CD8-positive, alpha-beta T cell (primary cell): ENCODE measurements at regions of chr20 and their contacts with region 1.

Region 1: DNA sequence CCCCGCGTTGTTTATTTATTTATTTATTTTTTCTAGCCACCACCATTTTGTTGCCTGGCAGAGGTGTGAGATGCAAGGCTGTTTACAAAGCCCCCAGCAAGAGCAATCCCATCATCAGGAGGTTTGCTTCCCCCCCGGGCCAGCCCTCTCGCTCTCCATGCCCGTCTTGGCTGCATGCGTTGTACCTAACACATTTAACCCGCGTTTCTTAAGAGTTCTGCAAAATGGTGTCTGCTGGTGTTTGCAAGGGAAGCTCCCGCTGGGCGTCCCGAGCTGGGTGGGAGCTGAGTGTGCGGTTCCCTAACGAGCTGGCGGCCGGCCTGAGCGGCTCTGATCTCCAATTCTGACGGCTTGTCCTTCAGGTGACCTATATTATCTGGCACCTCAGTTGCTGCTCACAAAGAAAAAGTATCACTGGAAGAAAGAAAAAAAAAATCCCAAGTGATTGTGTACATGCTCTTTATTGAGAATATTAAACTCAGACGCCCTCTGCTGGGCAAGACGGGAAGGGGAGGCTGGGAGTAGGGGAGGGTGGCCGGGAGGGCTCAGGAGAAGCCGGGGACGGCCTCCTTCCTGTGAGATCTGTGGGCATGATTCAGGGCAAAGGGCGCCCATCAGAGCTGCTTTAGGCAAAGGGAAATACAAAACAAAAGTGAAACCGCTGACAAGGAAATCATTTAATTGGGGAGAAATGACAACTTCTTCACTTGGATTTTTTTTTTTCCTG is 154.8 kb downstream of the BCAS1 start:
- DNase-seq: peak; percentile 87 to 98 (median 95)
- ATAC-seq: peak; percentile 98
- H3K4me3 ChIP-seq: peak overlapping the region; percentile 76 to 81
- H3K4me3 Mint-ChIP-seq: peak overlapping the region; percentile 94
- H3K27ac ChIP-seq: peak overlapping the region; percentile 38 to 64
- H3K27ac Mint-ChIP-seq: peak overlapping the region; percentile 92
- H3K4me1 ChIP-seq: peaks cover 21% of the 10 kb centered on the region
- H3K4me1 Mint-ChIP-seq: peaks cover 26% of the 10 kb centered on the region
- H3K27me3 ChIP-seq: no peaks in the 10 kb centered on the region
- H3K27me3 Mint-ChIP-seq: no peaks in the 10 kb centered on the region
- CTCF ChIP-seq: peak; percentile 85

Region 2: DNA sequence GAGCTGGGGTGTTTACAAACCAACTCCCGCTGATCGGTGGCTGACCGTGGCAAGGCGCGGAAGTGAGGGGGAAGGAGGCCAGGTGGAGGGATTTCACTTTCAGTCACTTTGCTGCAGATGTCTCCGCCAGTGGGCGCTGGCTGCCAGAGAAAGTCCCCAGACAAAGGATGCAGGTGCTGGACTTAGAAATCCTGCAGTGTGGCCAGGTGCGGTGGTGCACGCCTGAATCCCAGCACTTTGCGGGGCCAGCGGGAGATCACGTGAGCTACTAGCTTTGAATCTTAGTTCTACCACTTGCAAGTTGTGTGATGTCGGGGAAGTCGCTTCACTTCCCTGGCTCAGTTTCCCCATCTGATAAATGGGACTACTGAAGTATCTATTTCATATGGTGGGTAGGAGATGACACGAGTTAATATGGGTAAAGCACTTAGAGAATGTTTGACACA is 502.4 kb before region 1 on chr20:
- CTCF ChIA-PET with region 1: no interaction called
- POLR2A ChIA-PET with region 1: no interaction called
- intact Hi-C with region 1: loop called in 1 of 2 experiments (anchors 10 kb)
- DNase-seq: peak; percentile 23 to 75 (median 53)
- ATAC-seq: no peak
- H3K4me3 ChIP-seq: no peak overlapping the region
- H3K4me3 Mint-ChIP-seq: peak overlapping the region; percentile 53
- H3K27ac ChIP-seq: no peak overlapping the region
- H3K27ac Mint-ChIP-seq: peak overlapping the region; percentile 32
- H3K4me1 ChIP-seq: peaks cover 4% of the 10 kb centered on the region
- H3K4me1 Mint-ChIP-seq: peaks cover 6% of the 10 kb centered on the region
- H3K27me3 ChIP-seq: no peaks in the 10 kb centered on the region
- H3K27me3 Mint-ChIP-seq: peaks cover 3% of the 10 kb centered on the region
- CTCF ChIP-seq: peak; percentile 51

Region 3: DNA sequence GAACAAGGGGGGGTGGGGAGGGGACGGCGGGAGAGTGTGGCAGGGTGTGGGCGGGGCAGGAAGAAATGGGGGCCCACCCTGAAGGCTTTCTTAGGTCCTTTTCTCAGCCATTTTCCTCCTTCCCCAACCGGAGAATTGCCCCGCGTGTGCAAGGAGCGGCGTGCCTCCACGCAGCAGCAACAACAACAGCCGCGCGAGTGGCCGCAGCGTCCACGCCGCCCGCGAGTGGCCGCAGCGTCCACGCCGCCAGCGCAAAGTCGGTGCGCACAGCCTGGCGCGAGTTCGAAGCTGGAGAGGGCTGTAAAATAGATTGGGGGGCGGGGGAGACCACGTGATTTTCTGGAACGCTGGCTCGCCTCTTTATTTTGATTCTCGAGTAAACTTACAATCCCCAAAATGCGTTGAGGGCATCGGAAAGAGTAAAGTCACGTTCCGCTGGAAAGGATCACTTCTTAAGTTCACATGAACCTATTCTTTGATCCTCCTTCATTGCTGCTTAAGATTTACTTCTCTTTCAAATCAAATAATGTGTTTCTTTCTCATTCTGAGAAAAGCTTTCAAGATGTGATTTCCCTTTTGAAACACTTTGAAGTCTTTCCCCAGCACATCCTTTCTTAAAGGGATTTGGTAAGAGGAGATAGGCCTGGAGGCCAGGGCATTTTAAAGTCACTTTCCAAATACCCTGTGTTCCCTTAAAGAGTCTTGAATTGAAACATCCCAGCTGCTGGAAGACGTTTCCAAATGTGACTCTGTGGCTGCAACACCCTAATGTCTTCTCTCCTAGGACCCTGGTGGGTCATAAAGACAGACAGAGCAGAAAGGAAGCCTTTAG is 255.3 kb before region 1 on chr20:
- CTCF ChIA-PET with region 1: interaction called, 4 read pairs
- POLR2A ChIA-PET with region 1: interaction called, 3 read pairs
- intact Hi-C with region 1: loop called in 1 of 2 experiments (anchors 5 kb)
- DNase-seq: peak in 6 of 9 experiments; percentile 10 to 68 (median 44)
- ATAC-seq: peak; percentile 47
- H3K4me3 ChIP-seq: peak overlapping the region; percentile 45 to 61
- H3K4me3 Mint-ChIP-seq: peak overlapping the region; percentile 87
- H3K27ac ChIP-seq: peak overlapping the region; percentile 49 to 67
- H3K27ac Mint-ChIP-seq: peak overlapping the region; percentile 94
- H3K4me1 ChIP-seq: peaks cover 53% of the 10 kb centered on the region
- H3K4me1 Mint-ChIP-seq: peaks cover 62% of the 10 kb centered on the region
- H3K27me3 ChIP-seq: no peaks in the 10 kb centered on the region
- H3K27me3 Mint-ChIP-seq: no peaks in the 10 kb centered on the region
- CTCF ChIP-seq: no peak

Region 4: GRCh38 chr20:53828682-53829254 is 86.8 kb before region 1 on chr20:
- CTCF ChIA-PET with region 1: interaction called, 6 read pairs
- POLR2A ChIA-PET with region 1: no interaction called
- intact Hi-C with region 1: loop called in 1 of 2 experiments (anchors 5 kb)
- DNase-seq: peak in 2 of 9 experiments; percentile 27 to 51
- ATAC-seq: peak; percentile 23
- H3K4me3 ChIP-seq: peak overlapping the region; percentile 28 to 33
- H3K4me3 Mint-ChIP-seq: peak overlapping the region; percentile 86
- H3K27ac ChIP-seq: peak overlapping the region; percentile 47 to 88
- H3K27ac Mint-ChIP-seq: peak overlapping the region; percentile 97
- H3K4me1 ChIP-seq: peaks cover 34% of the 10 kb centered on the region
- H3K4me1 Mint-ChIP-seq: peaks cover 57% of the 10 kb centered on the region
- H3K27me3 ChIP-seq: no peaks in the 10 kb centered on the region
- H3K27me3 Mint-ChIP-seq: no peaks in the 10 kb centered on the region
- CTCF ChIP-seq: no peak

Region 5: DNA sequence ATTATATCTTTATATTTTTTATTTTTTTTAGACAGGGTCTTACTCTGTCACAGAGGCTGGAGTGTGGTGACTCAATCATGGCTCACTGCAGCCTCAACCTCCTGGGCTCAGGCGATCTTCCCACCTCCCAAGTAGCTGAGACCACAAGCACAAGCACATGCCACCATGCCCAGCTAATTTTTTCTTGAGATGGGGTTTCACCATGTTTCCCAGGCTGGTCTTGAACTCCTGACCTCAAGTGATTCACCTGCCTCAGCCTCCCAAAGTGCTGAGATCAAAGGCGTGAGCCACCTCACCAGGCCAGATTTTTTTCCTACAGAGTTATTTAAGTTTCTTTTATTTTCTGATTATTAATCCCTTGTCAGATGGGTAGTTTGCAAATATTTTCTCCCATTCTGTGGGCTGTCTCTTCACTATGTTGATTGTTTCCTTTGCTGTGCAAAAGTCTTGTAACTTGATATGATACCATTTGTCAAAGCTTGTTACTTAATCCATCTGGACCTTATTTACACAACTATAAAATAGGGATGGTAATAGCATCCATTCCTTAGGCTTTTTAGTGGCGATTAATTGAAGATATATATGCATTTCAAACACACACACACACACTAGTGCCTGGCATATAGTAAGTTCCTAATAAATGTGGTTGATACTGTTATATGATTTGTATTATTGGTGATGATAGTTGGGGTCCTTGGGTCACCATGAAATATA is 32.4 kb before region 1 on chr20:
- CTCF ChIA-PET with region 1: interaction called, 11 read pairs
- POLR2A ChIA-PET with region 1: interaction called, 9 read pairs
- intact Hi-C with region 1: no loop called
- DNase-seq: no peak
- ATAC-seq: no peak
- H3K4me3 ChIP-seq: no peak overlapping the region
- H3K4me3 Mint-ChIP-seq: no peak overlapping the region
- H3K27ac ChIP-seq: no peak overlapping the region
- H3K27ac Mint-ChIP-seq: peak overlapping the region; percentile 99
- H3K4me1 ChIP-seq: peaks cover 56% of the 10 kb centered on the region
- H3K4me1 Mint-ChIP-seq: peaks cover 60% of the 10 kb centered on the region
- H3K27me3 ChIP-seq: no peaks in the 10 kb centered on the region
- H3K27me3 Mint-ChIP-seq: no peaks in the 10 kb centered on the region
- CTCF ChIP-seq: no peak

Region 6: GRCh38 chr20:53934421-53935343 is 19.1 kb after region 1 on chr20:
- CTCF ChIA-PET with region 1: interaction called, 43 read pairs
- POLR2A ChIA-PET with region 1: interaction called, 10 read pairs
- intact Hi-C with region 1: loop called in 1 of 2 experiments (anchors 2 kb)
- DNase-seq: peak in 4 of 9 experiments; percentile 30 to 65 (median 42)
- ATAC-seq: peak; percentile 75
- H3K4me3 ChIP-seq: peak overlapping the region in 1 of 2 experiments; percentile 14
- H3K4me3 Mint-ChIP-seq: peak overlapping the region; percentile 67
- H3K27ac ChIP-seq: peak overlapping the region; percentile 21 to 72
- H3K27ac Mint-ChIP-seq: peak overlapping the region; percentile 85
- H3K4me1 ChIP-seq: peaks cover 34% of the 10 kb centered on the region
- H3K4me1 Mint-ChIP-seq: peaks cover 54% of the 10 kb centered on the region
- H3K27me3 ChIP-seq: no peaks in the 10 kb centered on the region
- H3K27me3 Mint-ChIP-seq: no peaks in the 10 kb centered on the region
- CTCF ChIP-seq: no peak